Heart left ventricle (tissue), 16 donors: ENCODE measurements at regions of chr15 and their contacts with region 1.

Region 1: GRCh38 chr15:24924621-24925020 is 30.2 kb upstream of the SNRPN start:
- DNase-seq: no peak
- ATAC-seq: peak in 3 of 4 donors; percentile 29 to 57 (median 52)
- H3K4me3 ChIP-seq: no peak overlapping the region
- H3K27ac ChIP-seq: peak overlapping the region in 1 of 12 donors; percentile 42
- H3K4me1 ChIP-seq: no peaks in the 10 kb centered on the region
- H3K27me3 ChIP-seq: no peaks in the 10 kb centered on the region
- CTCF ChIP-seq: no peak
- POLR2A ChIP-seq: no peak

Region 2: GRCh38 chr15:24878153-24878552 is 46.5 kb before region 1 on chr15:
- intact Hi-C with region 1: loop called in 1 of 10 experiments (anchors 10 kb)
- DNase-seq: peak in 4 of 5 donors; percentile 28 to 48 (median 34)
- ATAC-seq: peak; percentile 55 to 92 (median 71)
- H3K4me3 ChIP-seq: peak overlapping the region in 10 of 12 donors; percentile 18 to 55 (median 43)
- H3K27ac ChIP-seq: peak overlapping the region in 2 of 12 donors; percentile 35 to 46
- H3K4me1 ChIP-seq: no peaks in the 10 kb centered on the region
- H3K27me3 ChIP-seq: no peaks in the 10 kb centered on the region
- CTCF ChIP-seq: no peak
- POLR2A ChIP-seq: no peak

Region 3: GRCh38 chr15:25087137-25087536 is 162.5 kb after region 1 on chr15:
- intact Hi-C with region 1: no loop called
- DNase-seq: no peak
- ATAC-seq: no peak
- H3K4me3 ChIP-seq: no peak overlapping the region
- H3K27ac ChIP-seq: no peak overlapping the region
- H3K4me1 ChIP-seq: no peaks in the 10 kb centered on the region
- H3K27me3 ChIP-seq: no peaks in the 10 kb centered on the region
- CTCF ChIP-seq: no peak
- POLR2A ChIP-seq: no peak

Region 4: DNA sequence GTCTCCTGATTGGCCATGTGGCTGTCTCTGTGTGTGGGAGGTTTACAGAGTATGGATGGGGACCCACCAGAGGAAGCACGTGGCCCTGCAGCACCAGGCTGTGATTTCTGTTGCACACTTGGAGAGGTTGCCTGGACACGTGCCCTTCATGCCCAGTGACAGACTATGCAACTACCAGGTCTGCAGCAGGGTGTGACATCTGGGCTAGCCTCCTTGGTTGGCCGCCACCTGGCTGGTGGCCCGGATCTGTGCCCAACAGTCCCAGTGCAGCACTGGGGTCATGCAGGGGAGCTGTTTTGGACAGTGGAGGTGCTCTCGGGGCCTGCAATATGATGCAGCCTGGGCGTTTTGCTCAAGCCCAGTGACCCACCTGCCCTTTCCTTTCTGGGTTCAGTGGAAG is 301.7 kb after region 1 on chr15:
- intact Hi-C with region 1: loop called in 1 of 10 experiments (anchors 10 kb)
- DNase-seq: peak; percentile 52 to 77 (median 59)
- ATAC-seq: peak; percentile 84 to 92 (median 89)
- H3K4me3 ChIP-seq: no peak overlapping the region
- H3K27ac ChIP-seq: no peak overlapping the region
- H3K4me1 ChIP-seq: no peaks in the 10 kb centered on the region
- H3K27me3 ChIP-seq: no peaks in the 10 kb centered on the region
- CTCF ChIP-seq: no peak
- POLR2A ChIP-seq: no peak